ENCODE measurements at regions of chr2 and their contacts with region 1.

Region 1: GRCh38 chr2:173965329-173966025 is at the start of gene SP3:
- DNase-seq: peak; percentile 97
- H3K4me3 ChIP-seq: peak within 1 kb of the TSS; percentile 100
- H3K27ac ChIP-seq: peak within 1 kb of the TSS; percentile 97
- H3K4me1 ChIP-seq: peaks cover 25% of the 10 kb centered on the region
- CTCF ChIP-seq: no peak
- total RNA-seq, gene SP3: 129 and 150 TPM in 2 replicates

Region 2: DNA sequence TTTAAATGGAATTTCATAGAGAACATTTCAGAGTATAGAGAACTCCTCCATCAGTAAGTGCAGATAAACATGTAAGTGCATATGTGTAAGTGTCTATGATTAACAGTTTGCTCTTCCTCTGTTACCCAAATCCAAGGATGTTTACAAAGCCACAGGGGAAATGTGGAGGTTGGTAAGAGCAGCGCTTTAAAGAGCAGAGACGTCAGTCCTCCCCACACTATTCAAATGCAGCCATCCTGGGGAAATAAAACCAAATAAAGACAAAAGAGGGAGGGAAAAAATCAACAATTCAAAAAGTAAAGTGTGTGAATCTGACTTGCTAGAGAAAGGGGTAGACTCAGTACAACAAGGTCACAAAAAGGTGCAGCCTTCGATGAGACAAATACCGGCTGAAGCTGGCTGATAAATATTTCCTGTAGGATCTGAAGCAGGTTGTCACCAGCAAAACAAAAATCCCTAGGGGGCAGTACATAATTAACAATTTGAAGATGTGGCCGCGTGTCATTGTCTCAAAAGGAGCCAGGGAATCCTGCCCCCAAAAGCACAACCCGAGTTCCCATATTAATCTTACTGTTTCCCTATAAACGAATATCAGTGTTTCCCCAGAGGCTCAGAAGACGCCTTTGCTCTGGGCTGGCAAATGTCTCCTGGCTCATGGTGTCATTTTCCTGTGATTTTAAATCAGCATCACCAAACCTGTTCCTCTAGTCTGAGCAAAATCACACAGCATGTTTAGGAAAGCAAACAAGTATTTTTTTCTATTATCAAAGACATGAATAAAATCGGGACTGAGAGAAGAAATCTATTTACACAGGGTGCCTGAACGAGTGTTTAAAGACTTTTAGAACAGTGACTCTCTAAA is 394.2 kb before region 1 on chr2:
- CTCF ChIA-PET with region 1: no interaction called
- POLR2A ChIA-PET with region 1: no interaction called
- intact Hi-C with region 1: loop called (anchors 5 kb)
- DNase-seq: peak; percentile 50
- H3K4me3 ChIP-seq: no peak overlapping the region
- H3K27ac ChIP-seq: no peak overlapping the region
- H3K4me1 ChIP-seq: no peaks in the 10 kb centered on the region
- CTCF ChIP-seq: peak; percentile 64

Region 3: GRCh38 chr2:173696274-173696673 is 269.2 kb before region 1 on chr2:
- CTCF ChIA-PET with region 1: no interaction called
- POLR2A ChIA-PET with region 1: no interaction called
- intact Hi-C with region 1: no loop called
- DNase-seq: no peak
- H3K4me3 ChIP-seq: no peak overlapping the region
- H3K27ac ChIP-seq: no peak overlapping the region
- H3K4me1 ChIP-seq: no peaks in the 10 kb centered on the region
- CTCF ChIP-seq: no peak

Region 4: DNA sequence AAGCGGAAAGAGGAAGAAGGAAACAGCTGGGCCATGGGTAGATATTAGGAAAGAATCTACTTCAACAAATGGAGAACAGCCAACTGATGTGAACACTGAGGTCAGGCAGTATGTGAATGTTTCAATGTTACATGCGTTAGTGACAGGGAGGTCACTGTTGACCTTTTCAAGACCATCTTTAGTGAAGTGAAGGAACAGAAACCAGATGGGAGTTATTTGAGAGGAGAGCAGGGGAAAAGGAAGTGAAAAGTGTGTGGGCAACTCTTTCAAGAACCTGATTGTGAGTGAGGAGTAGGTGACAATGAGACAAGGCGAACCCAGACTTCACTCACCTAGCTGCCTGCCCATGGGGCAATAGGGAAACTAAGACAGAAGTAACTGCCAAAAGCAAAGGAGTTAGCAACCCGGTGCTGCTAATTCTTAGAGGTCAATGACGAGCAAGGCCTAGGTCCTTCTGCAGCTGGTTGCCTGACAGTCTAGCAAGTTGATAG is 67.3 kb before region 1 on chr2:
- CTCF ChIA-PET with region 1: no interaction called
- POLR2A ChIA-PET with region 1: no interaction called
- intact Hi-C with region 1: loop called (anchors 2 kb)
- DNase-seq: peak; percentile 76
- H3K4me3 ChIP-seq: peak overlapping the region; percentile 13
- H3K27ac ChIP-seq: peak overlapping the region; percentile 20
- H3K4me1 ChIP-seq: peaks cover 27% of the 10 kb centered on the region
- CTCF ChIP-seq: no peak

Region 5: DNA sequence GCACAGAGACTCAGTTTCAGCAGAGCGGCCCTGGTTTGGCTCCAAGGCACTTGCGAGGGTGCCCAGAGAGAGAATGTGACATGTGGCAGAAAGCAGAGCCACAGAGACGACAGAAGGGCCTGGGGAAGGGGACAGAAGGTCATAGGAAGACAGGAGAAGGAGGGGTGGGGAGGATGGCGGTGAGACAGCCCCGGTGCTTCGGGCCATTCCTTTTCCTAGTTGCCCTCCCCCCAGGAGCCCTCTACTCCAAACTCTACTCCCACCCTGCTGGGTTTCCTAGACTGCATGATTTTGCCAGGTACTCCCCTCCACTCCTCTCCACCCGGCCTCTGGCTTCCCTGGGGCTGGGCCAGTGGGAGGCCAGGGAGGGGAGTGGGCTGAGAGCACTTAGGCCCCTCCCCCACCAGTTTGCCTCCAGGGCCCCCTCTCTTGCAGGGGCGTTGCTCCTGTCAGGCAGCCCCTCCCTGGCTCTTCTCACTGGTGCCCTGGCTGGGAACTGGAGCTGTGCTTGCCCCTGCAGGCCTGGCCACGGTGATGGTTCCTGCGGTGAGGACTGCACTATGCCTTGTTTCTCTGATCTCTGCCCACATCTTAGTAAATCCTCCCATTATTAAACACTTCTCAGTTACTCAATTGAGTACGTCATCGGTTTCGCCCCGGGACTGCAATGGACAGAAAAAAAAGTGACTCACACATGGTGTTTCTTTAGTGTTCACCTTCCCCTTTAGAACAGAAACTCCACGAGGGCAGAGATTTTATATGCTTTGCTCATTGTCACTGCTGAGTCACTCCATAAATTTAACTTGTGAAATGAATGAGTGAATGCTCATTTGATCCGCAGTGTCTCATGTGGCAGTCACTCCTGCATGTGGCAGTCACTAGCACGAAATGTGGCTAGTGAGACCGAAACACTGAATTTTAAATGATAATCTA is 58.4 kb after region 1 on chr2:
- CTCF ChIA-PET with region 1: no interaction called
- POLR2A ChIA-PET with region 1: no interaction called
- intact Hi-C with region 1: no loop called
- DNase-seq: no peak
- H3K4me3 ChIP-seq: no peak overlapping the region
- H3K27ac ChIP-seq: no peak overlapping the region
- H3K4me1 ChIP-seq: peaks cover 7% of the 10 kb centered on the region
- CTCF ChIP-seq: no peak

Region 6: GRCh38 chr2:174039551-174040416 is 74.3 kb after region 1 on chr2:
- CTCF ChIA-PET with region 1: no interaction called
- POLR2A ChIA-PET with region 1: interaction called, 3 read pairs
- intact Hi-C with region 1: loop called (anchors 1 kb)
- DNase-seq: peak; percentile 92
- H3K4me3 ChIP-seq: peak overlapping the region; percentile 38
- H3K27ac ChIP-seq: peak overlapping the region; percentile 63
- H3K4me1 ChIP-seq: peaks cover 6% of the 10 kb centered on the region
- CTCF ChIP-seq: peak; percentile 94

Region 7: DNA sequence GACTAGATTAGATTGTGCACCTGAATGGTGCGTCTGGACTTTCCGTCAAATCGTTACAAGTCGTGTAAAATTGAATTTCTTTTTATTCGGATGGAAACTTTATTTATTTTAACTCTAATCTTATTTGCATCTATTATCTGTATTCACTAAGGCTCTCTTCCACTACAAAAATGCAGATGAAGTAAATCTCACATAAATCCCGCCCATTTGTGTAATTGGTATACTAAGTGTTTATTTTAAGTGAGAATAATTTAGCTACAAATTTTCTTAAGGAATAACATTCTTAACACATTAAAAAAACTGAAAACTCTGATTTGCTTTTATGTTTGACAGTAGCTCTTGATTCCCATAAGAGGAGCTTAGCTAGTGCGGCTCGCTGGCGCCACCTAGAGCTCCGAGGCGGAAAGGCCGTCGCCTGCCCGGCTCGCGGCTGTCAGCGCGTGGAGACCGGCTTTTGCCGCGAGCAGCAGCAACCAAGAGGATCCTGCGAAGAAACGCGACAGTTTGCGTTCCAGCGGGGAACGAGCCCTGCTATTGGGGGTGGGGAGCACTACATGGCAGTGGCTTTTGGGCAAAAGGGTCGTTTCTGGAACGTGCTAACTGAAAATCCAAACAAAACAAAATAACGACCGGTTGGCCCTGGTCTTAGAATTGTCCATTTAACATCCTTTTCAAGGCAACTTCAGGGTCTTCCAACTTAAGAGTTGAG is 376.0 kb after region 1 on chr2:
- CTCF ChIA-PET with region 1: no interaction called
- POLR2A ChIA-PET with region 1: no interaction called
- intact Hi-C with region 1: loop called (anchors 5 kb)
- DNase-seq: peak; percentile 83
- H3K4me3 ChIP-seq: peak overlapping the region; percentile 49
- H3K27ac ChIP-seq: no peak overlapping the region
- H3K4me1 ChIP-seq: peaks cover 16% of the 10 kb centered on the region
- CTCF ChIP-seq: peak; percentile 99